GM23248 (cell line): ENCODE measurements at regions of chr17 and their contacts with region 1.

Region 1: GRCh38 chr17:49567871-49568694 is 7.6 kb upstream of the NXPH3 start:
- DNase-seq: peak; percentile 89
- H3K4me3 ChIP-seq: peak overlapping the region; percentile 80
- H3K27ac ChIP-seq: no peak overlapping the region
- H3K4me1 ChIP-seq: no peaks in the 10 kb centered on the region
- H3K27me3 ChIP-seq: no peaks in the 10 kb centered on the region

Region 2: DNA sequence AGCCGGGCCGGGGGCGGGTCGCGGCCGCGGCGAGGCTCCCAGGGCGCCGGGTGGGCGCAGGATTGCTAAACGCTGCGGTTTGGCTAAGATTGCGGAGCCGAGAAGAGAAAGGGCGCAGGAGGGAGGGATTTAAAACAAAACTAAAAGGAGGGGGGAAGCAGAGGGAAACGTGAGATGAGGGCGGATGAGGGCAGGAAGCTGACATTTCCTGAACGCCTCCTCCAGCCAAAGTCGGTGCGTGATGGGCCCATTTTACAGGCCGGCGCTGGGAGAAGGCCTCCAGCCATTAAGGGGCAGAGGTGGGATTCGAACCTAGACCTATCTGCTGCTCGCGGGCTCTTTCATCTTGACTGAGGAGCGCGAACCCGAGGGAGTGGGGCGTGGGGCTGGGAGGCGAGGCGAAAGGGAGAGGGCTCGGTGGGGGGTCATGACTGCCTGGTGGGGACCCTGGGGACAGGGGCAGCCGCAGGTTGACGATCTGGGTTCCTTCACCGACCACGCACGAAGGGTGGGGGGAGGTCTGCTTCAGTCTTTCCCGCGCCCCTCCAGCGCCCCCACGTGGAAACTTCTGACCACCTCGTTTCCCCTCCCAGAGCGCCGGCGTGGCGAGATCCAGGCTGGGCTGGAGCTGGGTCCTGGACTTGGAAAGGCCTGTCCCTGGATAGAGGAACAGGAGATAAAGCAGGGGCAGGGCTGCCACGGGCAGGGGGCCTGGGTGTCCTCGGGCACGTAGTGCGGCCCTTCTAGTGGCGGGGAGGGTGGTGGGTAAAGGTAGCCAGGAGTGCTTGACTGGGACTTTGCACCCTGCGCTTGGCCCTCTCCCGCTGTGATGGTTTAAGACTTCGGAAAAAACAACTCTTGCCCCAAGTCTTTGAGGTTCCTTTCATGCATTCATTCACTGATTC is 283.6 kb after region 1 on chr17:
- in situ Hi-C with region 1: loop called (anchors 10 kb)
- DNase-seq: peak; percentile 83
- H3K4me3 ChIP-seq: peak overlapping the region; percentile 74
- H3K27ac ChIP-seq: no peak overlapping the region
- H3K4me1 ChIP-seq: no peaks in the 10 kb centered on the region
- H3K27me3 ChIP-seq: no peaks in the 10 kb centered on the region

Region 3: DNA sequence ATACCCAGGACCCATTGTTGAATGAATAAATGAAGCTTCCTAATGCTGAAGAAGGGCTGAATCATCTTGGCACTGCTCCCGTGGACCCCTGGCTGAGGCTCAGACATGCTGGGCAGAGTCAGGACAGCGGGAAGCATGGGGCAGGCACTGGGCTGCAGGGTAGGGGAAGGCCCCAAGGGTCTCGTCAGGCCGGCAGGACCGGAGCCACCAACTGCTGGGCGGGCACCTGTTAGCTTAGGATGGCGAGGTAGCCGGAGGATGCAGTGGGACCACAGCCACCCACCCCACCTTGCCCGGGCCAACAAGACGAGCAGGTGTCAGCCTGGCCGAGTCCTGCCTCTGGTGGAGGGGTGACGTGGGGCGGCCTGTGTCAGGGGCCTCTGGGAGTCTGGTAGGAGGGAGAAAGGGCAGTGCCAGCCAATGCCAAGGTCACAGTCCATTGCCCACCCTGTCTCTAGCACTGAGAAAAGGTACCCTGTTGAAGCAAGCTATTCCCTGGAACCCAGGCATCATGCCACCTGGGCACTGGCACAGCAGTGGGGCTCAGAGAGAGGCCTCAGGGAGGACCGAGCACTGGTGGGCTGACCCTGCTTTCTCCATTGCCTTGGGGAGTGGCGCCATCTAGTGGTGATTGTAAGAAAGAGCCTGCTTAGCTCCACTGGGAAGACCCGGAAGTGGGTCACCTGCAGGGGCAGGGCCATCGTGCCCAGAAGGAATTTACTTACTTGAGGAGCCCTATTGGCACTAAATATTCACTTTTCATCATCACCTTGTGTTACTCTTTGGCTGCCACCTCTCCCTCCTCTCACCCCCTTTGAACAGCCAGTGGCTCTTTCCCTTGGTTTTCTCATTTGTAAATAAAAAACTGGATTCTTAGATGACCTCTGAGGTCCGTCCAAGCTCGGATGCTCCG is 430.0 kb after region 1 on chr17:
- in situ Hi-C with region 1: loop called (anchors 25 kb)
- DNase-seq: peak; percentile 86
- H3K4me3 ChIP-seq: no peak overlapping the region
- H3K27ac ChIP-seq: no peak overlapping the region
- H3K4me1 ChIP-seq: 0 out of 2 replicates have a peak, but pooled peaks cover 6% of the 10 kb centered on the region
- H3K27me3 ChIP-seq: peaks cover 39% of the 10 kb centered on the region